BJ (cell line): ENCODE measurements at regions of chr11 and their contacts with region 1.

Region 1: GRCh38 chr11:122754553-122755322 is 83.6 kb upstream of the CRTAM start:
- DNase-seq: no peak
- H3K4me3 ChIP-seq: no peak overlapping the region
- H3K27me3 ChIP-seq: no peaks in the 10 kb centered on the region
- CTCF ChIP-seq: peak; percentile 45

Region 2: GRCh38 chr11:122478986-122479385 is 275.8 kb before region 1 on chr11:
- CTCF ChIA-PET with region 1: no interaction called
- POLR2A ChIA-PET with region 1: no interaction called
- DNase-seq: no peak
- H3K4me3 ChIP-seq: no peak overlapping the region
- H3K27me3 ChIP-seq: no peaks in the 10 kb centered on the region
- CTCF ChIP-seq: no peak

Region 3: DNA sequence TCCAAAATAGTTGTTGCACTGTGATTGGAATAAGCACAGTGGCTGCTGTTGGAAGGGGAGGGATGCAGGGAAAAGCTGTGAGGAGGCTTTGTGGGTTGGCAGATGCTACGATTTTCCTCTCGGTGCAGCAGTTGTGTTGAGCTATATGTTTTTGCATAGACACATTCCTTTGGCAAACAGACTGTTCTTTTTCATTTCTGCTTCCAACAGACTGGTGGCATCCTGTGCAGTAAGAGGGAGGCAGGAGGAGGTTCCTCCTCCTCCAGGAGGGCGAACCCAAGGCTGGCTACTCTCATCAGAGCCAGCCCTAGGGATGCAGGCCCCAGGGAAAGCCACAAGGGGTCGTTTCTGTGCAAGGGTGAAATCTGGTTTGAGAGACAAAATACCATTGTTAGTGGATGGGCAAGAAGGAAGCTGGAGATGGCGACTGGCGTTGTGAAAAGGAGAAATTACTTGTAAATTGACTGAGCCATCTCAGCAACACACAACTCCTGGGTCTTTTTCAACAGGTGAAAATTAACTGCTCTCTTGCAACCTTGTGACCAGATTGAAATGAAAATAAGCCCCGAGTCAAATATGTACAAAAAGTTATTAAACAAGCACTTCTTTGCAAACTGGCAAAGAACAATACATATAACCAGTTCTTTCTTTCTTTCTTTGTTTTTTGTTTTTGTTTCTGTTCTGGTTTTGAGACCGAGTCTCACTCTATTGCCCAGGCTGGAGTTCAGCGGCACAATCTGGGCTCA is 125.8 kb before region 1 on chr11:
- CTCF ChIA-PET with region 1: interaction called, 12 read pairs
- POLR2A ChIA-PET with region 1: no interaction called
- DNase-seq: no peak
- H3K4me3 ChIP-seq: no peak overlapping the region
- H3K27me3 ChIP-seq: peaks cover 5% of the 10 kb centered on the region
- CTCF ChIP-seq: peak; percentile 93